HEK293T (cell line): ENCODE measurements at regions of chr1 and their contacts with region 1.

Region 1: GRCh38 chr1:225652729-225653462 is at the start of gene ENAH:
- DNase-seq: peak; percentile 82

Region 2: DNA sequence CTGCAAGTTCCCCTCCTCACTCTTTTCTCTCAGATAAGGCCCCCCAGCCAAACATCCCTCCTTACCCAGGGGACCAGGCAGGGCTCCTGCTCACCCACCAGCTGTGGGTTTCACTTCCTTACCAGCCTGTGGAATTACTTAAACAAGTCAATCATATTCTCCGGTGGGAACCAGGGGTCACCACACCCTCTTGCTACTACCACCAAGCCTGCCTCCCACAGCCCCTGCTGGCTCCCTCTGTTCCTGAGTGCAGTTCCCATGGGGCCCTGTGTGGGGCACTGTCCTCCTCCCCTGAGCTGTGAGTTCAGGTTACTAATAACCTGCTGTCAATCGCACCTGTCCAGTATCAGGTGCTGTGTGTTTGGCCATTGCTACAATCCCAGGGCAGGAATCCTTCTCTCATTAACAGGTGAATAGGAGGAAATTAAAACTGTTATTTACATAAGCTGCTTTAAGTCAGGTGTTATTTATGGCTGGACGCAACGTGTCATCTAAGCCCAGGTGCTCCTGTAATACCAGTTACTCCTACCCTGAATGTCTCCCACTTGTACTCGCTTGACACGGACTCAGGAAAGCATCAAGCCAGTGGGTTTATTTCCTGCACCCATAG is 172.0 kb before region 1 on chr1:
- CTCF ChIA-PET with region 1: interaction called, 8 read pairs
- POLR2A ChIA-PET with region 1: interaction called, 13 read pairs
- DNase-seq: peak; percentile 84

Region 3: GRCh38 chr1:225567590-225568194 is 85.2 kb before region 1 on chr1:
- CTCF ChIA-PET with region 1: no interaction called
- POLR2A ChIA-PET with region 1: interaction called, 10 read pairs
- DNase-seq: peak; percentile 43

Region 4: DNA sequence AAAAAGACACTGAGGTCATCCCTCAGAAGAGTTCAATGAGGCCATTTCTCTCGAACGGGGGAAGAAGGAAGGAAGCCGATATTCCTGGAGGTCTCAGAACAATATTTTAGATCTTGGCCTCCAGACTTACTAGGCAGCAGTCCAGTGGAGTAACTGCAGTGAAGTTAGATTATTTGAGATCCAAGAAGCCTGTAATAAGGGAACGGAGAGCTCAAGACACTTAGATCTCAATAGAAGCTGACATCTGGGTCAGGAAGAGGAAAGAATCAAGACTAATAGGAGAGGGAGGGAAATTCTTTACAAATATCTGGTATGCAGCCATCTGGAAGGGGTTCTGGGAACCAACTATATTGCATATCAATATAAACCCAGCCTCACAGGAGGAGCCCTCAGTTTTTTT is 13.6 kb after region 1 on chr1:
- CTCF ChIA-PET with region 1: interaction called, 8 read pairs
- POLR2A ChIA-PET with region 1: interaction called, 10 read pairs
- DNase-seq: no peak

Region 5: GRCh38 chr1:225766967-225767633 is 114.2 kb after region 1 on chr1:
- CTCF ChIA-PET with region 1: interaction called, 18 read pairs
- POLR2A ChIA-PET with region 1: interaction called, 24 read pairs
- DNase-seq: no peak

Region 6: GRCh38 chr1:225772323-225772768 is 119.5 kb after region 1 on chr1:
- CTCF ChIA-PET with region 1: interaction called, 18 read pairs
- POLR2A ChIA-PET with region 1: interaction called, 34 read pairs
- DNase-seq: peak; percentile 92